K562 (cell line): ENCODE measurements at regions of chr4 and their contacts with region 1.

Region 1: GRCh38 chr4:128558896-128559679 is 250.4 kb upstream of the JADE1 start:
- DNase-seq: no peak
- ATAC-seq: no peak
- H3K4me3 ChIP-seq: no peak overlapping the region
- H3K27ac ChIP-seq: no peak overlapping the region
- H3K4me1 ChIP-seq: peaks cover 0 to 6% of the 10 kb centered on the region in 2 experiments; a peak in 3 of 5 replicates
- H3K27me3 ChIP-seq: no peaks in the 10 kb centered on the region
- CTCF ChIP-seq: no peak
- EP300 ChIP-seq: no peak
- POLR2A ChIP-seq: no peak
- RAD21 ChIP-seq: no peak

Region 2: GRCh38 chr4:128427832-128428366 is 131.2 kb before region 1 on chr4:
- CTCF ChIA-PET with region 1: no interaction called
- POLR2A ChIA-PET with region 1: no interaction called
- in situ Hi-C with region 1: no loop called
- intact Hi-C with region 1: no loop called
- DNase-seq: peak; percentile 33 to 72 (median 54)
- ATAC-seq: peak; percentile 98
- H3K4me3 ChIP-seq: no peak overlapping the region
- H3K27ac ChIP-seq: no peak overlapping the region
- H3K4me1 ChIP-seq: no peaks in the 10 kb centered on the region; a peak in 1 of 5 replicates
- H3K27me3 ChIP-seq: no peaks in the 10 kb centered on the region
- CTCF ChIP-seq: peak; percentile 67 to 85 (median 74)
- EP300 ChIP-seq: no peak
- POLR2A ChIP-seq: no peak
- RAD21 ChIP-seq: peak; percentile 67 to 82

Region 3: GRCh38 chr4:128461291-128462102 is 97.6 kb before region 1 on chr4:
- CTCF ChIA-PET with region 1: no interaction called
- POLR2A ChIA-PET with region 1: no interaction called
- in situ Hi-C with region 1: loop called (anchors 5 kb)
- intact Hi-C with region 1: no loop called
- DNase-seq: peak; percentile 23 to 72 (median 40)
- ATAC-seq: peak; percentile 87
- H3K4me3 ChIP-seq: no peak overlapping the region
- H3K27ac ChIP-seq: peak overlapping the region; percentile 46; the same call in 2 of the 3 replicates
- H3K4me1 ChIP-seq: peaks cover 0 to 11% of the 10 kb centered on the region in 2 experiments; a peak in 2 of 5 replicates
- H3K27me3 ChIP-seq: no peaks in the 10 kb centered on the region
- CTCF ChIP-seq: no peak
- EP300 ChIP-seq: no peak
- POLR2A ChIP-seq: no peak
- RAD21 ChIP-seq: peak in 1 of 2 experiments; percentile 24; a peak in 3 of 4 replicates